ENCODE measurements at regions of chr10 and their contacts with region 1.

Region 1: GRCh38 chr10:91908337-91909116 is 759 bp downstream of the FGFBP3 start:
- DNase-seq: peak; percentile 58 to 96 (median 76)

Region 2: GRCh38 chr10:91493313-91493712 is 415.2 kb before region 1 on chr10:
- intact Hi-C with region 1: loop called (anchors 10 kb)
- DNase-seq: no peak

Region 3: DNA sequence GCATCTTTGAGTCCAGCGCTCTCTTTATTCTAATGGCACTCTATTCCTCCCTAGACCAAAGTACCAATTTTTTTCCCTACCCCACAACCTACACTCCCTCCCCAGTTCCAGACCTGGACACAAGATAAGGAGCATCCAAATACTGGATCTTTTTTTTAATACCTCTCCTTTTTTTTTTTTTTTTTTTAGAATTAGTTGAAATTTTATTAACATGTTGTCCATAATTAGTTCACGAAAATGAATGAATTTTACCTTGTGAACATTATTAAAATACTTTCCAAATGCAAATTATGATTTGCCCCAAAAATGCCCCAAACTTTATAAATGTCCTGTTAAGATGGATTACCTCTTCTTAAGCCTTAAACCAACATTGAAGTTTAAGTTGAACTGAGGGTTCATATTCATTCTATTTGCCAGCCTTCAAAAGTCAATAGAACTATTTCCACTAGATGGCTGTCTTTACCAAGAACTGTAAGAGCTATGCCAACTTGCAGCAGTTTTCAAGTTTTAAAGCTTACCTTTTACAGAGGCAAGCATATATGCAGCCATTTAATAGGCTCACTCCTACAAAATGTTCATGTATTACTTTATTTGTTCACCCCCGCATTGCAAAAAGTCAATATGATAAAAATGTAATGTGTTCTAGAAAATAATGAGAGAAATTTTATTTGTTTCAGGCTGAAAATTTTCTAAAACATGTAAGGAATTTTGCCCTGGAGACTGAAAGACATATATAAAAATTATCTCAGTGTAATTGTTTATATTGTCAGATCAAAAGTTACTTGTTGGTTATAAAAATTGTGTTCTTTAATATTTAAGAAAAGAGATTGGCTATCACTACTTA is 150.0 kb before region 1 on chr10:
- intact Hi-C with region 1: loop called (anchors 2 kb)
- DNase-seq: no peak

Region 4: GRCh38 chr10:91805110-91805838 is 103.3 kb before region 1 on chr10:
- intact Hi-C with region 1: loop called (anchors 10 kb)
- DNase-seq: no peak

Region 5: DNA sequence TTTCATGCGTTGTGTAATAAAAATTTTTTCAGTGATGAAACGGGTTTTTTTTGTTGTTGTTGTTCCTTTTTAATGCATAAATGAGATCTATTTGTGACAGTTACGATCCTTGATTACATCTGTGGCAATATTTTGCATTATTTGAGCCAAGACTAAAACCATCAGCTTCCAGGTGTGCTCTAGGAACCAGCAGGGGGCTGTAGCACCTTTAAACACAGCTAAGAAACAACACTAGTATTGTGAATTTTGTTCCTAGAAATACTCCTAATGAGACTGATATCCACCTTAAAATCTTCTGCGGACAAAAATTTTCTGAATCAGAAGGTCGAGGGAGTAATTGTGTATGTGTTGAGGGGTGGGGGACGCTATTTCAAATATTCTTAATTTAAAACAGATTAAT is 51.9 kb before region 1 on chr10:
- intact Hi-C with region 1: no loop called
- DNase-seq: no peak

Region 6: GRCh38 chr10:91923371-91924211 is 15.1 kb after region 1 on chr10 and contains the start of gene BTAF1:
- intact Hi-C with region 1: loop called (anchors 2 kb)
- DNase-seq: peak; percentile 87 to 99 (median 93)

Region 7: DNA sequence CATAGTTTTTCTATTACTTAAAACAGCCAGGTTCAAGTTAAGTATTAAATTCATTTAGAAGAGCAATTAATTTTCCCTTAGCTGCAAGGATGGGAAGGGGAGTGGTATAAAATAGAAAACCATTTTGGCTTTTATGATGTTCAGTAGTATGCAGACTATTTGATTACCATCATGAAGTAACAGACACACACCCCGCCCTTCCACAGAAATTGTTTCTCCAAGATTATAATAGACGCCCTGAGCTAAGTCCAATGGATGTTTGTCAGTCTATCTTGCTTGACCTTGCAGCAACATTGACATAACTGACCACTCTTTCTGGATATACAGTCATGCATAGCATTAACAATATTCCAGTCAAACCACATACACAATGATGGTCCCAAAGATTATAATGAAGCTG is 340.0 kb after region 1 on chr10:
- intact Hi-C with region 1: no loop called
- DNase-seq: no peak

Measured in posterior cingulate gyrus (tissue), 11 donors.